Activated CD4-positive, alpha-beta memory T cell treated with anti-CD3 and anti-CD28 coated beads for 36 hours (primary cell): ENCODE measurements at regions of chr16 and their contacts with region 1.

Region 1: GRCh38 chr16:19521471-19522396 is at the start of gene GDE1:
- DNase-seq: peak; percentile 96
- H3K4me3 Mint-ChIP-seq: peak within 1 kb of the TSS; percentile 90
- H3K27ac Mint-ChIP-seq: peak within 1 kb of the TSS; percentile 75
- H3K4me1 Mint-ChIP-seq: peaks cover 48% of the 10 kb centered on the region
- H3K27me3 Mint-ChIP-seq: no peaks in the 10 kb centered on the region
- total RNA-seq, gene GDE1: 18.4 to 19.0 TPM

Region 2: DNA sequence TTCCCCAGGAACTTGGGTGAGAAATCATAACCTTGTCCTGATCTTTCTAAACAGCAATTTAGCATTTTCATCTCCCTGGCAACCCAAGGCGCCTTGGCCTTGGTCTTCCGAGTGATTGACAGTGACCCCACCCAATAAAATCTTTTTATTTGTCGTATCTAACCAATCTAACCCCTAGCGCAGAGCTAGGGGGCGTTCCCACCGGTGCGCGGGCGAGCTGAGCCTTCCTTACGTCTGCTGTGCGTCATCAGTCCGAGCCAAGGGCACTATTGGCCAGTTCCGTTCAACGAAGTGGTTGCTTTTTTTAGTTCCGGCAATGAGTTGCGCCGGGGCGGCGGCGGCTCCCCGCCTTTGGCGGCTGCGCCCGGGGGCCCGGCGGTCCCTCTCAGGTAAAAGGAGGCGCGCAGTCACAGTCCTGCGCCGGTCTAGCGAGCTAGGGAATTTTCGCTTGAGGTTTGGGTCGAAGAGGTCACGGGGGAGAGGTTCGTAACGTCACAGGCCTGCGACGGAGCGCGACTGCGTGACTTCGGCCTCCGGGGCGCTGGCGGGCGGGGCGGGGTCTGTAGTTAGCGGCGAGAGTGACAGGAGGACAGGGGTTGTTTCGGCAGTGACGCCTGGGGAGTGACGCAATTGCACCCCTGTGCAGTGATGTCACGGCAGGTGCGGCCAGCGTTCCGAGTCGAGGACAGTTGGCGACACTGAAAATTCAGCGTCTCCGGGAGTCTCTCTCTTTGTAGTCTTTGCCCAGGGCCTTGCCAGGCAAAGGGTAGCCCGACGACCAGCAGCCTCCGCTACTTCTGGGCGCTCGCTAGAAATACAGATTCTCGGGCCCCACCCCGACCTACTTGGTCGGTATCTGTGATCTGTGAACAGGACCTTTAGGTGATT is 454.1 kb before region 1 on chr16 and contains the start of gene COQ7:
- CTCF ChIA-PET with region 1: interaction called, 3 read pairs
- POLR2A ChIA-PET with region 1: interaction called, 3 read pairs
- intact Hi-C with region 1: loop called (anchors 5 kb)
- DNase-seq: peak; percentile 99
- H3K4me3 Mint-ChIP-seq: peak within 1 kb of the TSS; percentile 91
- H3K27ac Mint-ChIP-seq: peak within 1 kb of the TSS; percentile 93
- H3K4me1 Mint-ChIP-seq: peaks cover 7% of the 10 kb centered on the region
- H3K27me3 Mint-ChIP-seq: no peaks in the 10 kb centered on the region
- total RNA-seq, gene COQ7: 14.1 to 15.2 TPM

Region 3: DNA sequence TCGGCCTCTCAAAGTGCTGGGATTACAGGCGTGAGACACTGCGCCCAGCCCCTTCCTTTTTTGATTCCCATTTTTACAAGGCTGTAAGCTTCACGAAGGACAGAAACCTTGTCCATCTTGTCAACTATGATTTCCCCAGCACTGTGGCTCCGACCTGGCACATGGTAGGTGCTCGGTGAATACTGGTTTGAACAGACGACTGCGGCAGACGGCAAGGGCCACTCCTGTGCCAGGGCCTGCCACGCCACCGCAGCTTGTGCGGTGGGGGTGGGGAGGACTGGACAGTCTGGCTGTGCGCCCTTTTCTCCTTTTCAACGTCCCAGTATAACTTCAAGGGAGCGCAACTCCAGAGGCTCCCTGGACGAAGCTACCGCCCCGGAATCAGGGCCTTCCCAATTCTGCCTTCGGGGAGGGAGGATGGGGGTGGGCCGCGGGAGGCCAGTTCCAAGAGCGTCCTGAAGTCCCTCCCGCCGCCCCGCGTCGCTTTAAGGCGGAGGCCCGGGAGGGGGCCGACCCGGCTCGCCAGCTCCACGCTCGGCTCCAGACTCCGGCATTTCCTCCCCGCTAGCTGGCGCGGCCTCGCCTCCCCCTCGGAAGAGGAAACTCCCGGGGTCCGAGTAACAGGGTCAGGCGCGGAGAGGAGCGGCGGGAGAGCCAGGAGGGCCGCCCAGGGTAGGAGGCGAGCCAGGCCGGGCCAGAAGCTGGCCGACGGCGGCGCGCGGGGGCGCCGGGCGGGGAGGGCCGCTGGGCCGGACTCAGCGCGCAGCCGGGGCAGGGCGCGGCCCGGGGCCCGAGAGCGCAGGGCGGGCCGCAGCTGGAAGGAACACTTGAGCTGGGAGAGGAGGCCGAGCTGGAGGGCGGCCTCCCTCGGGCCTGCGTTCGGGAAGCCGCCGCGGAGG is 408.0 kb before region 1 on chr16 and contains the start of gene ITPRIPL2:
- CTCF ChIA-PET with region 1: no interaction called
- POLR2A ChIA-PET with region 1: no interaction called
- intact Hi-C with region 1: loop called (anchors 5 kb)
- DNase-seq: peak; percentile 31
- H3K4me3 Mint-ChIP-seq: peak within 1 kb of the TSS; percentile 69
- H3K27ac Mint-ChIP-seq: peak within 1 kb of the TSS; percentile 78
- H3K4me1 Mint-ChIP-seq: peaks cover 18% of the 10 kb centered on the region
- H3K27me3 Mint-ChIP-seq: peaks cover 21% of the 10 kb centered on the region
- total RNA-seq, gene ITPRIPL2: 8.9 to 9.7 TPM

Region 4: DNA sequence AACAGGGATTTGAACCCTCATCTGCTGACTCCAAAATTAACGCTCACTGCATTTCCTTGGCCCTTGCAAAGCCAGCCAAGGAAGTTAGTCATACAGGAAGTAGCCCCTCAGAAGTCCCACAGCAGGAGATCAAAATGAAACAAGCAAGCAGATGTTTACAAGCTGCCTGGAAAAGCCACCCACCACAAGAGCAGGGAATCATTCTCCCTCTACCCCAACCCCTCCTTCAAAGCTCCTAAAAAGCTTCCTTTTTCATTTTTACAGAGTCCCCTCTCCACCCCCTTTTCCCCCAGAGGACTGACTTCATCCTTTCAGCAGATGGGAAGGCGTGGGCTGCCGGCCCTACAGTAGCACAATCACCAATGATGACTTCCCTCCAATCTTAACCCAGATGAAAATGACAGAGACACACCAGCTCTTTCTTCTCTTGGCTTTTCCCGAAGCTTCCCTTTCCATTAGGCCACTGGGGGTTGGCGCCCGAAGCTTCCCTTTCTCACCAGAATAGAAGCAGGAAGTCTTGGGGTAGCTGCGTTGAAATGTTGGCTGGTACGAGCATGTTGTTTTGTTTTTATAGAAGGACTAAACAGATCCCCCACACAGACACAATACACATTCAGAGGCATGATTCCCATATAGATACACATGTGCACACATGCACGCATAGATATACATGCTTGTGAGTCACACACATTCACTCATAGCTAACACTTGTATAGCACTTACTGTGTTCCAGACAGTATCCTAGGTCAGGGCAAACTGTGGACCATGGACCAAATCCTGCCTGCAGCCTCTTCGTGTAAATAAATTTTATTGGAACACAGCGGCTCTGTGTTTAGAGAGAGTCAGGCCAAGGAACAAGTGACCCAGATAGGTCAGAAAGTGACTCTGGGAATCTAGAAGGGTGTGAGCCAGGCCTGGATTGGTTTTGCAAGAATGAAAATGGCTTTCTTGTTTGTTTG is 390.6 kb before region 1 on chr16:
- CTCF ChIA-PET with region 1: no interaction called
- POLR2A ChIA-PET with region 1: no interaction called
- intact Hi-C with region 1: no loop called
- DNase-seq: peak; percentile 26
- H3K4me3 Mint-ChIP-seq: no peak overlapping the region
- H3K27ac Mint-ChIP-seq: peak overlapping the region; percentile 66
- H3K4me1 Mint-ChIP-seq: peaks cover 35% of the 10 kb centered on the region
- H3K27me3 Mint-ChIP-seq: no peaks in the 10 kb centered on the region

Region 5: GRCh38 chr16:19450186-19450585 is 71.5 kb before region 1 on chr16:
- CTCF ChIA-PET with region 1: no interaction called
- POLR2A ChIA-PET with region 1: no interaction called
- intact Hi-C with region 1: no loop called
- DNase-seq: no peak
- H3K4me3 Mint-ChIP-seq: no peak overlapping the region
- H3K27ac Mint-ChIP-seq: no peak overlapping the region
- H3K4me1 Mint-ChIP-seq: no peaks in the 10 kb centered on the region
- H3K27me3 Mint-ChIP-seq: no peaks in the 10 kb centered on the region

Region 6: DNA sequence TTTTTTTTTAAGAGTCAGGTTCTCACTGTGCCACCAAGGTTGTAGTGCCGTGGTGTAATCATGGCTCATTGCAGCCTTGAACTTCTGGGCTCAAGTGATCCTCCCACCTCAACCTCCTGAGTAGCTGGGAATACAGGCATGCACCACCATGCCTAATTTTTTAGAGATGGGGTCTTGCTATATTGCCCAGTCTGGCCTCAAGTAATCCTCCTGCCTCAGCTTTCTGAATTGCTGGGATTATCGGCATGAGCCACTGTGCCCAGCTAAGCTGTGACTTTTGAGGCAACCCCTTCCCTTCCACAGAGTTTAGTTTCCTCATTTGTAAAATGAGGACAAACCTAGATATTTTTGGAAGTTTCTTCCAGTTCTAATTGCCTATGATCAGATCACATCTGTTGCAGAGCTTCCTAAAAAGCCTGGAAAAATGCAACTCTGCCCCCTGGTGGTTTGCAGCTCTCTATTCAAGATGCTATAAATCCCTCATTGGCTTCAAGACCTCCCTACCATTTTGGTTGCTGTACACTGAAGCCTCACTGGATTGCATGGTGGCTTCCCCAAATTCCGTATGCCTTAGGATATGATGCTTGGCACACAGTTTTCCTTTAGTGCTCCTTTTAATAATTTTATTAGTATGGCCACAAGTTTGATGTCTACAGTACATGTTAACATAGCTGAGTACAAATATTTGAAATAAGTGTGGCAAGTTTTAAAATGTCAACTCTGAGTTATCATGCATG is 19.2 kb before region 1 on chr16:
- CTCF ChIA-PET with region 1: interaction called, 17 read pairs
- POLR2A ChIA-PET with region 1: no interaction called
- intact Hi-C with region 1: no loop called
- DNase-seq: peak; percentile 76
- H3K4me3 Mint-ChIP-seq: no peak overlapping the region
- H3K27ac Mint-ChIP-seq: no peak overlapping the region
- H3K4me1 Mint-ChIP-seq: no peaks in the 10 kb centered on the region
- H3K27me3 Mint-ChIP-seq: no peaks in the 10 kb centered on the region

Region 7: GRCh38 chr16:19717771-19718602 is 196.3 kb after region 1 on chr16 and contains the starts of genes IQCK and KNOP1:
- CTCF ChIA-PET with region 1: no interaction called
- POLR2A ChIA-PET with region 1: no interaction called
- intact Hi-C with region 1: loop called (anchors 1 kb)
- DNase-seq: peak; percentile 93
- H3K4me3 Mint-ChIP-seq: peak within 1 kb of the TSS; percentile 92
- H3K27ac Mint-ChIP-seq: peak within 1 kb of the TSS; percentile 79
- H3K4me1 Mint-ChIP-seq: peaks cover 27% of the 10 kb centered on the region
- H3K27me3 Mint-ChIP-seq: no peaks in the 10 kb centered on the region
- total RNA-seq, gene IQCK: 2.2 to 3.0 TPM
- total RNA-seq, gene KNOP1: 24.3 to 26.4 TPM